Activated naive CD4-positive, alpha-beta T cell treated with anti-CD3 and anti-CD28 coated beads for 36 hours (primary cell): ENCODE measurements at regions of chr10 and their contacts with region 1.

Region 1: DNA sequence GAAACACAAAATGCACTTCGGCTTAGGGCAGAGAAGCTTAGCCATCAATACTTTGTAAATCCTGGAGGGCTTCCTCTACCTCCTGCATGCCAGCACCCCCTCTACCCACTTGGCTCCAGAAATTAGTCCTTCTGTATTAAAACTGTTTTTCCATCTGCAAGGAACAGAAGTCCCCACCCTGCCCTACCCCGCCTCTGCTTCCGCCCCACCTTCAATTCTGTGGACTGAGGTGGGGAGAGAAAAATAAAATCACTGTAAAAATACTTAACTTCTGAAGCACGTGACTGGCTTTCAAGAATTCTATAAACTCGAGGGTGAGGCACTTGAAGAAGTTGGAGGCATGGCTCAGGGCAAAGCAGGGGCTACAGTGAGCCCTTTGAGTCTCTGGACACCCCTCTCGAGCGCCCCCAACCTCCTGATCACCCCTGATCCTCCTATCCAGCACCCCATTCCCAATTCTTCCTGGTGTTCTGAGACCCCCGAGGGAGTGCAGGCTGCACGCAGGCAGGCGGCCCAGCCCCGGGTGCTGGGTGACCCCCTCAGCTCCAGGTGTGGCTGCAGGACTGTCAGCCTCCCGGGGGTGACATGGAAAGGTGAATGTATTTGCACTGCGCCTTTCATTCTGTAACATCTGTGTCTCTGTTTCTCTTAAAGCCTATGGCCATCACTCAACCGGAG is 7.3 kb upstream of the KIAA1217 start:
- DNase-seq: no peak
- H3K4me3 Mint-ChIP-seq: no peak overlapping the region
- H3K27ac Mint-ChIP-seq: no peak overlapping the region
- H3K4me1 Mint-ChIP-seq: peaks cover 6% of the 10 kb centered on the region
- H3K27me3 Mint-ChIP-seq: peaks cover 32% of the 10 kb centered on the region

Region 2: DNA sequence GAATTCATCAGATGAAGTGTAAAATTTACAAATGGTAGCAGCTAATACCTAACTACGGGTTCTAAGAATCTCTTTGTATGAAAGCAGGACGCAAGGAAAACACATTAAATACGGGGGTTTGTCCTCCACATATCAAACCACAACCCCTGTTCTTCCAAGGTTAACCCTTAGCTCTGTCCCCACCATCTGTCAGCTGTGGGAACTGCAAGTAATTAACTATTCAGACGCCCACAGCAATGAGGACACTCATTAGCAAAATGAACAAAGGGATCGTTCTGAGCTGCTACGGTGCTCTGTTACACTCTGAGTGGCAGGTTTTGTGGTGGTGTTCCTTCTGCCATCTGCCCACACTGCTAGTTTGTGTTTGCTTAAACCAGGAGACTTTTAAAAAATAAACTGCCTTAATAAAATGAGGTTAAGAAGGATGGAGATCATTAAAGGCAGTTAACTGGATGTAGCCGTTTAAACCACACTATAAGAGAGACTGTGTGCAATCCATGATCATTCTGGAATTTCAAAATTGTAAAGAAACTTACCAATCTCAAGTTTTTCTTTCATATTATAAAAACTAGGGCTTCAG is 908.4 kb before region 1 on chr10:
- CTCF ChIA-PET with region 1: no interaction called
- intact Hi-C with region 1: loop called (anchors 5 kb)
- DNase-seq: peak; percentile 71
- H3K4me3 Mint-ChIP-seq: no peak overlapping the region
- H3K27ac Mint-ChIP-seq: no peak overlapping the region
- H3K4me1 Mint-ChIP-seq: peaks cover 2% of the 10 kb centered on the region
- H3K27me3 Mint-ChIP-seq: peaks cover 14% of the 10 kb centered on the region

Region 3: DNA sequence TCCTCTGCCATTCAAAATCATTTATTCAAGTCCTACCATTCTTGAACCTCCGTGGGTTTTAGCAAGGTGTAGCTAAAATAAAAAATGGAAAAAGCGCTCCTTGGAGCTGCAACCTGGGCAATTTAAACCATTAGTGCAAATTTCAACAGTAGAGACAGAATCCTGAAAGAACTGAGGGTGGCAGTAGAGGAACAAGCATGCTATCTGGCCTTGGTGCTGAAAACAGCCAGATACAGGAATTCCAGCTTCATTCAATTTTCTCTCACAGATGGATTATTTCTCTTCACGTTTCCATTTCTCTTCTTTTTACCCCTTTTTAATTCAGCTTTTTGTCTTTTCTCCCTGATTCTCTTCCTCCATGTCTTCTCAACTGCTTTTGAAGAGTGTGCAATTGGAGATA is 685.1 kb before region 1 on chr10:
- CTCF ChIA-PET with region 1: no interaction called
- intact Hi-C with region 1: loop called (anchors 1 kb)
- DNase-seq: no peak
- H3K4me3 Mint-ChIP-seq: no peak overlapping the region
- H3K27ac Mint-ChIP-seq: no peak overlapping the region
- H3K4me1 Mint-ChIP-seq: peaks cover 8% of the 10 kb centered on the region
- H3K27me3 Mint-ChIP-seq: no peaks in the 10 kb centered on the region

Region 4: GRCh38 chr10:23535381-23535780 is 666.3 kb before region 1 on chr10:
- CTCF ChIA-PET with region 1: no interaction called
- intact Hi-C with region 1: loop called (anchors 2 kb)
- DNase-seq: no peak
- H3K4me3 Mint-ChIP-seq: peak overlapping the region; percentile 14
- H3K27ac Mint-ChIP-seq: peak overlapping the region; percentile 72
- H3K4me1 Mint-ChIP-seq: peaks cover 77% of the 10 kb centered on the region
- H3K27me3 Mint-ChIP-seq: no peaks in the 10 kb centered on the region

Region 5: DNA sequence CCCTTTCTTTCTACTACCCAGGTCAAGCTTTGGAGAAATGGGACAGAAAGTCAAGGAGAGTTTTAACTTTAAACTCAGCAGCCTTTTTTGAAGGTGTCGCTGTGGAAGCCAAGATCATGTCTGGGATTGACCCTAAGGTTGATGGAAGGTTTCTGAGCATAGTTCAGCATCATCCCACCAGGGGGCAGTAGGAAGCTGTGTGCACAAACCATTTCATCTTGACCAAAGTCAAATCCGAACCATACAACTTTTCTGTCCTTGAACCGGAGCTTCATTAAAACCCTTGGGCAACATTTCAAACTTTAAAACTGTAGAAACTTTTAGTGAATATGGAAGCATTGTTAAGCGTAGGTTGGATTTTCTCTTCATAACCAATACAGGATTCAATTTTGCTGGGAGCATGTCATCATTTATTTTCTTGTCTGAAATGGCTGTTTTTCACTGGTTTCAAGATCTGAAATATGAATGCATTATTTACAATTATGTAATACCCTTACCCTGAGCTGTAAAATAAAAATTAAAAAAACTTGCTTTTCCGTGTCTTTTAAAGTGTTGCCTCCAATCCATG is 207.1 kb before region 1 on chr10:
- CTCF ChIA-PET with region 1: no interaction called
- intact Hi-C with region 1: loop called (anchors 1 kb)
- DNase-seq: peak; percentile 63
- H3K4me3 Mint-ChIP-seq: no peak overlapping the region
- H3K27ac Mint-ChIP-seq: no peak overlapping the region
- H3K4me1 Mint-ChIP-seq: no peaks in the 10 kb centered on the region
- H3K27me3 Mint-ChIP-seq: peaks cover 5% of the 10 kb centered on the region

Region 6: DNA sequence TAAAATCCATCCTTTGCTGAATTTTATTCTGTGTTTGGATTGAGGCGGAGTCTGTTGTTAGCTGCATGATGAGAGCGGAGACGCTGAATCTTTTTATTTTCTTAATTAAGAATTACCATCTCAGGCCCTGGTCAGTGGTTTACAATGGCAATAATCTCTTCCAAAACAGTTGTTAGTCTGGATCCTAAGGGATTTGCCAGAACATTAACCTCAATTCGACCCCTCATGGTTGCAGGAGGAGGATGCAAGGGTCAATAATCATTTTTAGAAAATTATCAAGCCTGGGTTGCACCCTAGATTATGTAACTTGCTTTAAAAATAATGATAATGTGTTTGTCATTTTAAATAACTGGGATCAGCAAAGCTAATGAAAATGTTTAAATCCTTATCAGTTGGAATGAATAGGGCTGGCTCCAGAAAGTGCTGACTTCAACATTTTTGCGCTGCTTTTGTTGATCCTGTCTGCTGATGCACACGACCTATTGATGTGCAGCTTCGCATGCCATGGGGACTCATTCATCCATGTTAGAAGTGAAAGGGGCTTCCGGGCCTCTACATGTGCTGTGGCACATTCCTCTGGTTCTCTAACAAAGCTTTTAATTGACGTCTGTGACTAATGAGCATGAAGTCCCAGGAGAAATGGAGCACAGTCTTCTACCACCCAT is 73.4 kb before region 1 on chr10:
- CTCF ChIA-PET with region 1: no interaction called
- intact Hi-C with region 1: no loop called
- DNase-seq: no peak
- H3K4me3 Mint-ChIP-seq: no peak overlapping the region
- H3K27ac Mint-ChIP-seq: no peak overlapping the region
- H3K4me1 Mint-ChIP-seq: no peaks in the 10 kb centered on the region
- H3K27me3 Mint-ChIP-seq: peaks cover 2% of the 10 kb centered on the region

Region 7: GRCh38 chr10:24360282-24361127 is 158.9 kb after region 1 on chr10:
- CTCF ChIA-PET with region 1: no interaction called
- intact Hi-C with region 1: loop called (anchors 1 kb)
- DNase-seq: peak; percentile 74
- H3K4me3 Mint-ChIP-seq: no peak overlapping the region
- H3K27ac Mint-ChIP-seq: no peak overlapping the region
- H3K4me1 Mint-ChIP-seq: no peaks in the 10 kb centered on the region
- H3K27me3 Mint-ChIP-seq: peaks cover 4% of the 10 kb centered on the region

Region 8: DNA sequence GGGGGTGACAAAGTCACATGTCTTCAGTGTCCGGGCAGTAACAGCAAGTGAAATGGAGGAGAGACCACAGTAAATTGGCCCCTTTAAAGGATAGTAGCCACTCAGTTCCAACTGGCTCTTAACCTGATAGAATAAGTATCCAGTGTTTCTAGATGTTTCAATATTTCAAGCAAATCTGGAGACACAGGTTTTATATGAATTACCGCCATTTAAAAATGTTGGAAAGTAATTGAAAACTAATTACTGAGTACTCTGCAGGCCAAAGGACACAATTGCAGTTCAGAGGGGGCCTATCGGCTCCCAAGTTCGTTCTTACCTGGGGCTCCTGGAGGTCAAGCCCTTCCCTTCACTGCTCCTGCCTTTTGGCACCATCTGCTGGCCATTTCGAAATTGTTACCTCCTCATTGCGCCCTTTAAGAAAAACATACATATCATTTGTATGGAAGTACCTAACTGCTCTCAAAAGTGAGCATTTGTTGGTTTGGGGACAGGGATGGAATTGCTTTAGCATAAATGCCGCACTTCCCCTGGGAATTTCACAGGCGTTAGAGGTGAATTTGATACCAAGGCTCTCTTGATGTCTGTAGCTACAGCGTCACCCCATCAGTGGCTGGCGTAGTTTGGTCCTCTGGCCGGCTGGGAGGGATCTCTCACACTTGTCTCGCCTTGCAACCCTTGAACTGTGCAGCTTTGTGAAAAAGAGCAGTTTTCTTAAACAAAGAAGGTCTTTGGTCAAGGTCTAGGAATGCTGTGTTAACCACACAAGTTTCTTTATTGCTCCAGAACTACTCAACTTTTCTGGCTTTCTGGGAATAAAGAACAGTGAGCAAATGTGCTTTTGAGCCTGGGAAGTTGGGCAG is 302.0 kb after region 1 on chr10:
- CTCF ChIA-PET with region 1: no interaction called
- intact Hi-C with region 1: loop called (anchors 5 kb)
- DNase-seq: peak; percentile 58
- H3K4me3 Mint-ChIP-seq: no peak overlapping the region
- H3K27ac Mint-ChIP-seq: no peak overlapping the region
- H3K4me1 Mint-ChIP-seq: no peaks in the 10 kb centered on the region
- H3K27me3 Mint-ChIP-seq: peaks cover 14% of the 10 kb centered on the region